Activated naive CD4-positive, alpha-beta T cell treated with anti-CD3 and anti-CD28 coated beads for 36 hours (primary cell): ENCODE measurements at regions of chr17 and their contacts with region 1.

Region 1: DNA sequence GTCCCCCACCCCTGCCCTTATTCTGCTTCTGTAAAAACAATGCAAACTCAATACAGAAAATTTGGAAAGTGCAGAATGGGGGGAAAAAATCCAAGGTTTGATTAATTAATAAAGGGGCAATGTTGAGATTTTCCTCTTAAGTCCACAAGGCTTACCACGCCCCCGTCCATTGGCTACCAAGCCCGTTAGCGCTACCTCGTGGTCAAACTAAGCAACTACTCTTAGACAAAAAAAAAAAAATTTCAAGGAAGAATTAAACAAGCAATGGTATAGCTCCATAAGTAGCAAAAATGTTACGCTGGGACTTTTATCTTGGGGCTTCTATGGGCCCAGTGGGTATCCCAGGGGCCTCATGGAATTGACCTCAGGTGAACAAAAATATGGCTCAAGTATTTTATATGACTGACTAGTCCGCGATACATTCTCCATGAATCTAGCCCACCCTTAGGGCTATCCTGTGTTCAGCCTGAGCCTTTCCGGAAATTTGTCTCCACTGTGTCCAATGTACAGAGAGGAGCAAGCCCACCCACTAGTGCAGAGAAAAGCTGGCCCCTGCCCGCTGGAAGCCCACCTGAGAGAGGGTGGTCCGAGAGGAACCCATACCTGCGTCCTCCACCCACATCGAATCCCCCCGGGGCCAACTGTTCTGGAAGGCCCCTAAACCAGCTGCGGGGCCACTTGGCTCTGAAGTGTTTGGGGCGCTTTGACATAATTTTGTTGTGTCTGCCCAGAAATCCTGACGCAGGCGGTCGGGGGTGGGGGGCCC is 19.1 kb upstream of the TEX2 start:
- DNase-seq: peak; percentile 67
- H3K4me3 Mint-ChIP-seq: no peak overlapping the region
- H3K27ac Mint-ChIP-seq: no peak overlapping the region
- H3K4me1 Mint-ChIP-seq: peaks cover 4% of the 10 kb centered on the region
- H3K27me3 Mint-ChIP-seq: no peaks in the 10 kb centered on the region

Region 2: GRCh38 chr17:62933501-62934385 is 1348.4 kb before region 1 on chr17:
- CTCF ChIA-PET with region 1: no interaction called
- intact Hi-C with region 1: no loop called
- DNase-seq: no peak
- H3K4me3 Mint-ChIP-seq: no peak overlapping the region
- H3K27ac Mint-ChIP-seq: no peak overlapping the region
- H3K4me1 Mint-ChIP-seq: no peaks in the 10 kb centered on the region
- H3K27me3 Mint-ChIP-seq: peaks cover 35% of the 10 kb centered on the region

Region 3: GRCh38 chr17:63911657-63912426 is 370.3 kb before region 1 on chr17:
- CTCF ChIA-PET with region 1: interaction called, 4 read pairs
- intact Hi-C with region 1: loop called (anchors 5 kb)
- DNase-seq: peak; percentile 74
- H3K4me3 Mint-ChIP-seq: no peak overlapping the region
- H3K27ac Mint-ChIP-seq: no peak overlapping the region
- H3K4me1 Mint-ChIP-seq: no peaks in the 10 kb centered on the region
- H3K27me3 Mint-ChIP-seq: no peaks in the 10 kb centered on the region

Region 4: GRCh38 chr17:64063766-64064224 is 218.3 kb before region 1 on chr17:
- CTCF ChIA-PET with region 1: interaction called, 7 read pairs
- intact Hi-C with region 1: loop called (anchors 1 kb)
- DNase-seq: peak; percentile 82
- H3K4me3 Mint-ChIP-seq: peak overlapping the region; percentile 16
- H3K27ac Mint-ChIP-seq: peak overlapping the region; percentile 66
- H3K4me1 Mint-ChIP-seq: peaks cover 67% of the 10 kb centered on the region
- H3K27me3 Mint-ChIP-seq: no peaks in the 10 kb centered on the region

Region 5: DNA sequence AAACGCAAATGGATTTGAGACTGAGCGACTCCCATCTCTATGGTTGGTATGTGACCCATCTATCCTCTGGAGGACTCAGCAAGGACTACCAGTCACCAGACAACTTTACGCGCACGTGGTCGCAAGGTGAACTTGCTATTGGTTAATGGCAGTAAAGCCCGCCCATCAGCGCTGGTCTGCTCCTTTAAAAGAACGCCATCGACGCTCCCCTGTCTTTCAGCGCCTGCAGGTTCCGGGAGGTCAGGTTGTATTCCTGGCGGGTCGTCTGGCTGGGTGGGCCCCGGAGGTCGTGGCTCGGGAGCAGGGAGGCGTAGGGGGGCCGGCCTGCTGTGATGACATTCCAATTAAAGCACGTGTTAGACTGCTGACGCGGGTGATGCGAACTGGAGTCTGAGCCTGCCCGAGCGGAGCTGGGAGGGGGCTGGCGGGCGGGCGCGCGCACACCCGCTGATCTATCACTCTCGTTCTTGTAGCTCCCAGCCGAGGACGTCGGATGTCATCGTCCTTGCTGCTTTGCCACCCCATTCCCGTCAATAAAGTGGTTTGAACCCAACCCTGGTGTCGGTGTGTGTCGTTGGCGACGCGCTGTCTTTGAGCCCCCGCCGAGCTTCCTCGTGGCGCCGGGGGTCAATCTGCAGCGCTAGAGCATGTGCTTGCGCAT is 136.3 kb before region 1 on chr17:
- CTCF ChIA-PET with region 1: interaction called, 35 read pairs
- intact Hi-C with region 1: loop called (anchors 1 kb)
- DNase-seq: peak; percentile 97
- H3K4me3 Mint-ChIP-seq: no peak overlapping the region
- H3K27ac Mint-ChIP-seq: no peak overlapping the region
- H3K4me1 Mint-ChIP-seq: peaks cover 16% of the 10 kb centered on the region
- H3K27me3 Mint-ChIP-seq: no peaks in the 10 kb centered on the region

Region 6: DNA sequence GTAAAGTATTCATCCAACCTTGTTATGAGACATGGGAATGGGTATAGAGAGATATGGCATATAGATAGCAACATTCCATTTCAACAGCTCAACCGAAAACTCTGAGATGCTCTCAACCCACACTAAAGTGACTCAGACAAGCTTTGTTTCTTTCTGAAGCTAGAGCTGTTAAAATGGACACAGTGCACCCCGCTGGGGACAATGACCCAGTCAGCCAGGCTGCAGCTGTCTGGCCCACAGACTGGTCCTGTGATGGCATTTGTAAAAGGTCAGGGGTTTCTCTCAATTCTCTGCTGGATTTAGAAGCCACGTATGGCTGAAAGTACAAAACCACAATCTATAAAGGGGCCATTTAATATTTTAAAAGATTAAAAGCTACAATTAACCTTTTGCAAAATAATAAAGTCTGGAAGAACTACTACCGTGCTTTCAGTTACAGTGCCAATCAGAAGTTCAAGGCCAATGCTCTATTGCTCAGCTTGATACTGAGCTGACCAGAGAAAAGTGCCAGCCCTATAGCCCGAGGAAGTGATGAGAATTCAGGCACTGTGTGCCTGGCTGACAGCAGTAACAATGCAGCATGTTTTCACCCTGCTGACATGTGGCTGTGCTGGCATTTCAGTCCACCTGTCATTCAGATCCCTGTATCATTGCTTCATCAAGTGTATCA is 79.3 kb before region 1 on chr17:
- CTCF ChIA-PET with region 1: interaction called, 5 read pairs
- intact Hi-C with region 1: loop called (anchors 1 kb)
- DNase-seq: no peak
- H3K4me3 Mint-ChIP-seq: no peak overlapping the region
- H3K27ac Mint-ChIP-seq: no peak overlapping the region
- H3K4me1 Mint-ChIP-seq: peaks cover 34% of the 10 kb centered on the region
- H3K27me3 Mint-ChIP-seq: no peaks in the 10 kb centered on the region

Region 7: GRCh38 chr17:64216338-64217248 is 65.6 kb before region 1 on chr17:
- CTCF ChIA-PET with region 1: interaction called, 11 read pairs
- intact Hi-C with region 1: loop called (anchors 5 kb)
- DNase-seq: no peak
- H3K4me3 Mint-ChIP-seq: no peak overlapping the region
- H3K27ac Mint-ChIP-seq: no peak overlapping the region
- H3K4me1 Mint-ChIP-seq: peaks cover 33% of the 10 kb centered on the region
- H3K27me3 Mint-ChIP-seq: no peaks in the 10 kb centered on the region

Region 8: DNA sequence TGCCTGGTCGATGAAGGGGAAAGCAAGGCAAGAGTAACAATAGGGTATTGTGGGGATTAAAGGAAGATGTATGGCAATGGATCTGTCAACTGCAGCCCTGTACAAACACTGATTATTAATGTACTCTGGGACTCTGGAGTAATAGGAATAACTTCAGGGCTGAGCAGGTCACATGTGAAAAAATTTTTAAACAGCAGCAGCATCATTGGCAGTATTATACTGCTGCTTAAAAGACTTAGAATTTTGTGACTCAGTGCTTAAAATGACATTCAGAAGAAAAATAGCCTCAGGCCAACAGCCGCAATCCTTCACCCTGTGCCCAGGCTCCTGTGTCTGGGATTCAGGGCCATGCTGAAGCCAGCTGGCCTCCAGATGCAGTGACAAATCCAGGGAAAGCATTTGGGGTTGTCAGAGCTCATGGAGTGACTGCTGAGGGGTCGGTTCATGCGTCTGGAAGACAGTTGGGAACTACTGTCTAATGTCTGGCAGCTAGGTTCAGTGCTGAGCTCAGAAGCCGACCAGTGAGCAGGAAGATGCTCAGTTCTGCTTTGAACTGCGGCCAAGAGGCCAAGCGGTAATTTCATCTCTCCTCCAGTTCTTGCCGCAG is 41.3 kb before region 1 on chr17:
- CTCF ChIA-PET with region 1: interaction called, 11 read pairs
- intact Hi-C with region 1: no loop called
- DNase-seq: no peak
- H3K4me3 Mint-ChIP-seq: no peak overlapping the region
- H3K27ac Mint-ChIP-seq: peak overlapping the region; percentile 25
- H3K4me1 Mint-ChIP-seq: peaks cover 41% of the 10 kb centered on the region
- H3K27me3 Mint-ChIP-seq: no peaks in the 10 kb centered on the region